Head of caudate nucleus (tissue), 42 donors: ENCODE measurements at regions of chr19 and their contacts with region 1.

Region 1: DNA sequence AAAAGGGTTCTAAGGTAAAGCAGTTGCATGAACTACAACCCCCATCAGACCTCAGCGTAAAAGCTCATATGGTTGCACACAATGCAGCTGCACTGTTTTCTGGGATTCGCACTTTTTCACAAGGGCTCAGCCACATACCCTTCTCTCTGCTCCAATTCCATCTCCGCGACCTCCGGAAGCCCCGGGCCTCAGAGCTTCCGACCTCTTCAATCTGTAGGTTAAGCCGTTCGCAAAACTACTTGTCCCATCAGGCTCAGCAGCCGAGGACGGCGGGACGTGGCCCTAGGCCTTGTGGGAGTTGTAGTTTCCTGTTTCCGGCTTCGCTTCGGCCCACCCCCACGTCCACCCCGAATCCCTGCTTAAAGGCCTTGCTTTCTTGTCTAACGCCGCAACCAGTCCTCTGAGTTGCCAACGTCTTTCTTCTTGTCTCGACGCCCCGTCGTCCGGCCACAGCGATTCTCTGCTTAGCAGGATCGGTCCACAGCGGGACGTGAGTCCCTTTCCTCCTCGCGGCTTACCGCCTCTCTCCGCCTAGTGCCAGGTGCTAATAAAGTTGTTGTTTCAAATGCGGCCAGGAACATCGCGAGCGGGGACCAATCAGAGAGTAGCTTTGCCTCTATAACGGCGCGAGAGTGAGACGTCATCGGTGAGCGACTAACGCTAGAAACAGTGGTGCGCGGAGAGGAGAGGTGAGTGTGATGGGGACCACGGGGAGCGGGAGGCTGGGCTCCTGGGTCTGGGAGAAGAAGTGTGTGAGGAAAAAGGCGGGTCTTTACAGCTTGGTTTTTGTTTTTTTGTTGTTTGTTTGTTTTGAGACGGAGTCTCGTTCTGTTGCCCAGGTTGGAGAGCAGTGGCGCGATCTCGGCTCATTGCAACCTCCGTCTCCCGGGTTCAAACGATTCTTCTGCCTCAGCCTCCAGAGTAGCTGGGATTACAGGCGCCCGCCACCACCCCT is at the starts of genes PRPF31 and TFPT:
- DNase-seq: peak; percentile 90 to 99 (median 96)

Region 2: DNA sequence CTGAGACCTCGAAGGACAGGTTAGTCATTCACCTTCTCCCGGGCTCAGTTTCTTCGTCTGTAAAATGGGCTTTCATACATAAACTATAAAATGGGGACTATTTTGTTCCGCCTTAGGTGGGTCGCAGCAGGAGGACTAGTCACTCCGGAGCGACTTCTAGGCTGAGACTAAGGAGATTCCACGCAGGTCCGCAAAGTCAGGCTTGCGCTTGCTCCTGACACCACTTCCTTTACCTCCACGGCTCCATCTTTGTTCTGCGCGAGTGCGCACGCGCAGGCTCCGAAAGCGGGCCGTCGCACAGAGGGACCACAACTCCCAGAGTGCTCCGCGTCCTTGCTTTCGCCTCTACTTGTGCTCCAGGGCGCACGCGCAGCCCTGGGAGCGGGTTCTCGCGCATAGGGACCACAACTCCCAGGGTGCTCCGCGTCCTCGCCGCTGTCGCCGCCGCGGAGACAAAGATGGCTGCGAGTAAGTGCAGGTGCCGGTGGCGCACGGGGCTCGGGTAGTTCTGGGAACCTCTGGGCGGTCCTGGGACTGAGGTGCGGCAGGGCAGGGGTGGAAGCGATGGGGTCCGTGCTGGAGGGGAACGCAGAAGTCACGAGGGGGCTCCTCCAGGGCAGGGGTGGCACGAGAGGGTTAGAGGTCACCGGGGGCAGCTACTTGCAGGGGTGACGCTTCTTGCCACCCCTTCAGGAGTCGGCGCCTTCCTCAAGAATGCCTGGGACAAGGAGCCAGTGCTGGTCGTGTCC is 12.8 kb before region 1 on chr19 and contains the start of gene NDUFA3:
- intact Hi-C with region 1: loop called (anchors 1 kb)
- DNase-seq: peak; percentile 95 to 99 (median 98)